Transverse colon (tissue), 4 donors: ENCODE measurements at regions of chr19 and their contacts with region 1.

Region 1: GRCh38 chr19:18450931-18451845 is 13.3 kb upstream of the ISYNA1 start:
- DNase-seq: peak; percentile 90
- H3K4me3 ChIP-seq: no peak overlapping the region
- H3K27ac ChIP-seq: no peak overlapping the region
- H3K4me1 ChIP-seq: peaks cover 0 to 6% (median 5%) of the 10 kb centered on the region in 4 donors
- H3K27me3 ChIP-seq: no peaks in the 10 kb centered on the region
- CTCF ChIP-seq: peak; percentile 94 to 99 (median 98)
- EP300 ChIP-seq: no peak
- POLR2A ChIP-seq: no peak

Region 2: DNA sequence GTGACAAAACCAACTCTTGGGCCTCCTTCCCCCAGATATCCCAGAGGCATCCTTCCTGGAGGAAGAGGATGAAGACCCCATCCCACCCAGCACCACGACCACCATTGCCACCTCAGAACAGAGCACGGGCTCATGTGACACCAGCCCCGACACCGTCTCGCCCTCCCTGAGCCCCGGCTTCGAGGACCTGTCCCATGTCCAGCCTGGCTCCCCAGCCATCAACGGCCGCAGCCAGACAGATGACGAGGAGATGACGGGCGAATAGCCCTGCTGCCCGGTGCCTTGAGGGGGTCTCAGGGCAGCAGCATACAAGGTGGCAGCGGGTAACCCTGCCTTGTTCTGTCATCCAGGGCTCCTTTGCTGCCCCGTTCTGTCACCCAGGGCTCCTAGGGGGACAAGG is 117.2 kb after region 1 on chr19:
- in situ Hi-C with region 1: no loop called
- intact Hi-C with region 1: loop called (anchors 5 kb)
- DNase-seq: no peak
- H3K4me3 ChIP-seq: no peak overlapping the region
- H3K27ac ChIP-seq: no peak overlapping the region
- H3K4me1 ChIP-seq: peaks cover 9 to 22% (median 15%) of the 10 kb centered on the region in 4 donors
- H3K27me3 ChIP-seq: no peaks in the 10 kb centered on the region
- CTCF ChIP-seq: no peak
- EP300 ChIP-seq: no peak
- POLR2A ChIP-seq: no peak

Region 3: DNA sequence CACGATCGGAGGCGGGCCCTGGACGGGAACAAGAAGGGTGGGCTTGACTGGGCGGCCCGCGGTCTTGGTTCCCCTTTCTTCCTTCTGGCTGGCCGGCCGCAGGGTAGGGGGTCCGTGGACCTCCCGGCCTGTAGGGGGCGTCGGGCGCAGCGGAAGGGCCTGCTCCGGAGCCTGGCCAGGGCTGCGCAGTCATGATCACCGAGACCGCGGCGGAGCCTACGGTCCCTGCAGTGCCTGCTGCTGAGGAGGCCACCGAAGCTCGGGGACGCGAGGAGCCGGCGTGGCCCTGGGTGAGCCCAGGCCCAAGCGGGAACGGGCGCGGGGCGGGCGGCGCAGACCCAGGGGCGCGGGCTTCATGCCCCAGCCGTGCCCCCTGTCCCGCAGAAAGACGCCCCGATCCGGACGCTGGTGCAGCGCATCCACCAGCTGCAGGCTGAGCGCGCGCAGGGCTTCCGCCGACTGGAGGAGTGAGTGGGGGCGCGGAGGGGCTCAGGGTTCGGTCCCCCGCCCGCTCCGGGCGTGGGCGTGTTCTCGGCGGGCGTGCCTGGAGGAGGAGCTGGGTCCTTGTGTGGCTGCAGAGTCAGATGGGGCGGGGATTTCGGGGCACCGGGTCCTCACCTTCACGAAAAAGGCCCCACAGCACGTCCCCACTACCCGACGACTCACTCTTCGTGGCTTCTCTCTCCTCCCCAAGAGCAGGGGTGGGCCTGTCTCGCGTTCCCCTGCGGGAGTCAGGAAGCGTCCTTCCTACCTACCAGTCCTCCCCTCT is 137.6 kb after region 1 on chr19 and contains the start of gene REX1BD:
- in situ Hi-C with region 1: loop called in 2 of 4 experiments (anchors 25 kb)
- intact Hi-C with region 1: no loop called
- DNase-seq: peak; percentile 84
- H3K4me3 ChIP-seq: peak within 1 kb of the TSS; percentile 49 to 86 (median 80)
- H3K27ac ChIP-seq: peak within 1 kb of the TSS; percentile 86 to 98 (median 95)
- H3K4me1 ChIP-seq: peaks cover 5 to 24% (median 14%) of the 10 kb centered on the region in 4 donors
- H3K27me3 ChIP-seq: no peaks in the 10 kb centered on the region
- CTCF ChIP-seq: peak; percentile 85 to 89 (median 89)
- EP300 ChIP-seq: no peak
- POLR2A ChIP-seq: peak; percentile 47
- total RNA-seq, gene REX1BD: 75.1 to 171 (median 121) TPM

Region 4: GRCh38 chr19:18831524-18832305 is 380.5 kb after region 1 on chr19 and contains the start of gene UPF1:
- in situ Hi-C with region 1: loop called in 2 of 4 experiments (anchors 25 kb)
- intact Hi-C with region 1: no loop called
- DNase-seq: peak; percentile 96
- H3K4me3 ChIP-seq: peak within 1 kb of the TSS; percentile 83 to 94 (median 94)
- H3K27ac ChIP-seq: peak within 1 kb of the TSS; percentile 93 to 97 (median 94)
- H3K4me1 ChIP-seq: peaks cover 7 to 45% (median 38%) of the 10 kb centered on the region in 4 donors
- H3K27me3 ChIP-seq: peaks cover 4% of the 10 kb centered on the region
- CTCF ChIP-seq: peak in 1 of 5 experiments; percentile 8
- EP300 ChIP-seq: no peak
- POLR2A ChIP-seq: peak; percentile 18
- total RNA-seq, gene UPF1: 84.2 to 153 (median 91.9) TPM

Region 5: DNA sequence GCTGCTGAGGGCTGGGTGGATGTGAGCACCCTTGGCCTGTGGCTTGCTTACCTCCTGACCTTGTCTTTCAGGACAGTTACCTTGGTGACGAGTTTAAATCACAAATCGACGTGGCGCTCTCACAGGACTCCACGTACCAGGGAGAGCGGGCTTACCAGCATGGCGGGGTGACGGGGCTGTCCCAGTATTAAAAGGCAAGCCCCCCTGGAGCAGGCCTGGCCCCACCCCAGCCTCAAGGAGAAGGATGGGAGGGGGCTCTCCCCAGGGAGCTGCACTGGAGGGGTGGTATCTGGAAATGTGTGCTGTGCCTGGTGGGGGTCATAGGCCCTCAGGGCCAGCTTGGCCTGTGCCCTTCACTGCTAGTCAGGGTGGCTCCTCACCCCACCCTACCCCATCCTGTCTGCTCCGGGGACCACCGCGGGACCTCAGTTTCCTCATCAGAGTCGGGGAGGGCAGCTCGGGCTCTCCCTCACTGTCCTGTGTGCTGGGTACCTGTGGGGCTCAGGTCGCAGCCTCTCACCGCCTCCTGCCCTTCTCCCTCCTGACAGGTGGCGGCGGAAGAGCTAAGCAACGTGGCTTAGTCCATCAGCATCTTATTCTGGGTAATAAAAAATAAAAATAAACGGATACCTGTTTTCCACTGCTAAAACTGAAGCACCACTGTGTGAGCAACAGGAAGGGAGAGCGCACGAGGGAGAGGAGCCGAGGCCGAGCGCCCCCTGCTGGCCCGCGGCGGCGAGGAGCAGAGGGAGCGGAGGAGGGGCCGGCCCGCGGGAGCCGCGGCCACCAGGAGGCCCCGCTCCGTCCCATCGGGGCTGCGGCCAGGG is 415.0 kb after region 1 on chr19:
- in situ Hi-C with region 1: loop called in 1 of 4 experiments (anchors 25 kb)
- intact Hi-C with region 1: no loop called
- DNase-seq: peak; percentile 62
- H3K4me3 ChIP-seq: no peak overlapping the region
- H3K27ac ChIP-seq: no peak overlapping the region
- H3K4me1 ChIP-seq: peaks cover 0 to 15% (median 12%) of the 10 kb centered on the region in 4 donors
- H3K27me3 ChIP-seq: peaks cover 19% of the 10 kb centered on the region
- CTCF ChIP-seq: peak; percentile 87 to 99 (median 98)
- EP300 ChIP-seq: no peak
- POLR2A ChIP-seq: no peak

Region 6: DNA sequence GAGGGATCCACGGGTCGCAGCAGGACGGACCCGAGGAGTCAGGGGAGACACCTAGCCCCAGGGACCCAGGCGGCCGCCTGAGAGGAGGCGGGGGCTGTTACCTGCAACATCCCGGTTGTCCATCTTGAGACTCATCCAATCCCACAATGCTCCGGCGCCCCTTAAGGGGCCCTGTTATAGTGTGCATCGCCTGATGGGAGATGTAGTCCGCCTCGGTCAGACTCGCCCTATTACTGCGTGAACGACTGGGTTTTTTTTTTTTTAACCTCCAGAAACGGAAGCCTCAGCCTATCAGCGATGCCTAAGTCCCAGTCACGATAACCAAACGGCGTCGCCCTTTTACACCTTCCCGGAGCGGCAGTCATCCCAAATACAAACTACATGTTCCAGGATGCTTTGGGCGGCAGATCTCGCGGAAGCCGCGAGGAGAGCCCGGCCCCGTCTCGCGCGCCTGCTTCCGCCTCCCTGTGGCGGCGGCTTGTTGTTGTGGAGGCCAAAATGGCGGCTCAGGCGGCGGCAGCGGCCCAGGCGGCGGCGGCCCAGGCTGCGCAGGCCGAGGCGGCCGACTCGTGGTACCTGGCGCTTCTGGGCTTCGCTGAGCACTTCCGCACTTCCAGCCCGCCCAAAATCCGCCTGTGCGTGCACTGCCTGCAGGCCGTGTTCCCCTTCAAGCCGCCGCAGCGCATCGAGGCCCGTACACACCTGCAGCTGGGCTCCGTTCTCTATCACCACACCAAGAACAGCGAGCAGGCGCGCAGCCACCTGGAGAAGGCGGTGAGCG is 869.4 kb after region 1 on chr19 and contains the starts of genes MAU2 and SUGP1:
- in situ Hi-C with region 1: no loop called
- intact Hi-C with region 1: loop called (anchors 5 kb)
- DNase-seq: peak; percentile 92
- H3K4me3 ChIP-seq: peak within 1 kb of the TSS; percentile 96 to 98 (median 98)
- H3K27ac ChIP-seq: peak within 1 kb of the TSS; percentile 89 to 94 (median 94)
- H3K4me1 ChIP-seq: peaks cover 13 to 36% (median 23%) of the 10 kb centered on the region in 4 donors
- H3K27me3 ChIP-seq: no peaks in the 10 kb centered on the region
- CTCF ChIP-seq: peak in 3 of 5 experiments; percentile 37 to 71 (median 44)
- EP300 ChIP-seq: no peak
- POLR2A ChIP-seq: peak; percentile 60
- total RNA-seq, gene MAU2: 59.1 to 214 (median 79.2) TPM
- total RNA-seq, gene SUGP1: 31.1 to 118 (median 66.5) TPM